ENCODE measurements at regions of chr5 and their contacts with region 1.

Region 1: GRCh38 chr5:59007460-59008063 is 424.7 kb downstream of the RAB3C start:
- DNase-seq: peak in 3 of 14 experiments; percentile 30 to 38 (median 34)
- ATAC-seq: no peak
- H3K4me3 ChIP-seq: no peak overlapping the region
- H3K4me3 Mint-ChIP-seq: no peak overlapping the region
- H3K27ac ChIP-seq: no peak overlapping the region
- H3K27ac Mint-ChIP-seq: no peak overlapping the region
- H3K4me1 ChIP-seq: peaks cover 8% of the 10 kb centered on the region
- H3K4me1 Mint-ChIP-seq: peaks cover 74% of the 10 kb centered on the region
- H3K27me3 ChIP-seq: no peaks in the 10 kb centered on the region
- H3K27me3 Mint-ChIP-seq: no peaks in the 10 kb centered on the region
- CTCF ChIP-seq: peak; percentile 50

Region 2: GRCh38 chr5:58886315-58887207 is 121.0 kb before region 1 on chr5:
- CTCF ChIA-PET with region 1: interaction called, 3 read pairs
- POLR2A ChIA-PET with region 1: no interaction called
- intact Hi-C with region 1: loop called in 1 of 2 experiments (anchors 2 kb)
- DNase-seq: peak; percentile 36 to 83 (median 52)
- ATAC-seq: peak; percentile 81
- H3K4me3 ChIP-seq: no peak overlapping the region
- H3K4me3 Mint-ChIP-seq: no peak overlapping the region
- H3K27ac ChIP-seq: no peak overlapping the region
- H3K27ac Mint-ChIP-seq: no peak overlapping the region
- H3K4me1 ChIP-seq: peaks cover 20% of the 10 kb centered on the region
- H3K4me1 Mint-ChIP-seq: peaks cover 32% of the 10 kb centered on the region
- H3K27me3 ChIP-seq: peaks cover 0 to 4% of the 10 kb centered on the region in 2 experiments
- H3K27me3 Mint-ChIP-seq: peaks cover 5% of the 10 kb centered on the region
- CTCF ChIP-seq: peak; percentile 92

Region 3: DNA sequence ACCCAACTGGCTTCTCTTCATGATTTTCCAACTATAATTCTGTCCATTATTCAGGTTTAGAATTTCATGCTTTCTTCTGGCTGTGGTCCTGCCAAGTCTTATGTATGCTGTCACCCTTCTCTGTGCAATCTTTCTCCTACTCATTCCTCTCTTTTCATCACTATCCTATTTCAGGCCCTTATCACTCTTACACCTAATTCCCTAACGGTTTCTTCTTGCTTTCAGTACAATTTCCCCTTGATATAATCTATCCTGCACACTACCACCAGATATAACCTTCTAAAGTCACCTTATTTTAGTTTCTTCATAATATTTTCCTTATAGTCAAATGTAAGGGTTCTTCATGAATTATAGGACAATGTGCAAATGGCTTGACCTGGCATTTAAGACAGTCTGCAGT is 11.5 kb after region 1 on chr5:
- CTCF ChIA-PET with region 1: no interaction called
- POLR2A ChIA-PET with region 1: no interaction called
- intact Hi-C with region 1: loop called in 1 of 2 experiments (anchors 2 kb)
- DNase-seq: no peak
- ATAC-seq: no peak
- H3K4me3 ChIP-seq: no peak overlapping the region
- H3K4me3 Mint-ChIP-seq: no peak overlapping the region
- H3K27ac ChIP-seq: no peak overlapping the region
- H3K27ac Mint-ChIP-seq: no peak overlapping the region
- H3K4me1 ChIP-seq: peaks cover 3% of the 10 kb centered on the region
- H3K4me1 Mint-ChIP-seq: peaks cover 58% of the 10 kb centered on the region
- H3K27me3 ChIP-seq: no peaks in the 10 kb centered on the region
- H3K27me3 Mint-ChIP-seq: no peaks in the 10 kb centered on the region
- CTCF ChIP-seq: no peak

Measured in CD4-positive, alpha-beta T cell (primary cell).